ENCODE measurements at regions of chr10 and their contacts with region 1.

Region 1: GRCh38 chr10:58291538-58292174 is 22.7 kb downstream of the CISD1 start:
- DNase-seq: peak in 2 of 10 donors; percentile 6 to 18
- H3K4me3 ChIP-seq: no peak overlapping the region
- H3K27ac ChIP-seq: no peak overlapping the region
- H3K27me3 ChIP-seq: no peaks in the 10 kb centered on the region
- CTCF ChIP-seq: peak; percentile 47 to 92 (median 76)

Region 2: GRCh38 chr10:58177362-58177947 is 114.2 kb before region 1 on chr10:
- intact Hi-C with region 1: loop called (anchors 2 to 5 kb)
- DNase-seq: no peak
- H3K4me3 ChIP-seq: no peak overlapping the region
- H3K27ac ChIP-seq: no peak overlapping the region
- H3K27me3 ChIP-seq: peaks cover 0 to 4% (median 0%) of the 10 kb centered on the region in 45 donors
- CTCF ChIP-seq: peak; percentile 53 to 94 (median 78)

Region 3: DNA sequence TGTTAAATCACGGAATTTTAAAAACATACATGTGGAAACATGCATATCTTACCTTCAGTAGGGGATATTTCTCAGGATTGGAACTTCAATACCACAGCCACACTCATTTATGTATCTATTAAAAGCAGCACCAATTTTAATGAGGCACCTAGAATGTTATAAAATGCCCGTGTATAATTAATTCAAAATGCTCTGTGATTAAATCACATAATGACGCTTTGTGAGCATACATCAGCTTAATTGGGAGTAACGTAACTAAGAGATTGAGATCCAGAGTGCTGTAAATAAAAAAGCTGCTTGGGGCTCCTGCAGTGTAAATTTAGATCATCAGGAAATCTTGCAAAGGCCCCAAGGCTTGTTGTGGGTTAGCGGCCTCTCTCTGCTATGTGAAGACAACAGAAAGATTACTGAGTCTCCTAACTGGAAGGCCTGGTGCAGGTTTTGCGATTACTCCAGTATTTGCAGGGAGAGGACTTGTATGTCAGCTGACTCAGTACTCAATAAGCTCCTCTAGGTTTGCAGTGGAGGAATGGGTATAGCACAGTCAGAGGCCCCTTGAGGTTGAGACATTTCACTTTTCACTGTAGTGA is 689.3 kb after region 1 on chr10:
- intact Hi-C with region 1: no loop called
- DNase-seq: no peak
- H3K4me3 ChIP-seq: no peak overlapping the region
- H3K27ac ChIP-seq: peak overlapping the region in 20 of 59 donors; percentile 2 to 63 (median 32)
- H3K27me3 ChIP-seq: no peaks in the 10 kb centered on the region
- CTCF ChIP-seq: no peak